Psoas muscle (tissue), 8 donors: ENCODE measurements at regions of chr2 and their contacts with region 1.

Region 1: GRCh38 chr2:139409212-139409611 is 629.0 kb upstream of the NXPH2 start:
- DNase-seq: no peak
- ATAC-seq: no peak
- H3K4me3 ChIP-seq: no peak overlapping the region
- H3K27ac ChIP-seq: no peak overlapping the region
- H3K4me1 ChIP-seq: no peaks in the 10 kb centered on the region
- H3K27me3 ChIP-seq: no peaks in the 10 kb centered on the region
- CTCF ChIP-seq: no peak

Region 2: DNA sequence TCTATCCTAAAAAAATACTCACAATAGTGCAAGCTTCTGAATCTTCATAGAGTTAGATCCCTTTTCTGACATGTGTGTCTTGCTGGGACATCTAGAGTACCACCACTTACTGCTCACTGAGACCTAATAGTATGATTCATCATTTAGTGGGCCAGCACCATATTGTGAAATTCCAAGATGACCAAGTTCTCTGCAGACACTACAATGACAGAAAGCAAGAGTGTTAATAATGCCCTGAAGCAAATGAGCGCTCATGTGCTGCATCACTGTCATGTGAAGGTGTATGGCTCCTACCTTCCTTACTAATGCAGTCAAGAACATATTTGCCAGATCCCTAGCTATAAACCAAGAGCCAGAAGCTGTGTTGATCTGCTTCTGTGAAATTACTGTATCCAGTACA is 22.8 kb before region 1 on chr2:
- intact Hi-C with region 1: loop called in 1 of 2 experiments (anchors 1 kb)
- DNase-seq: no peak
- ATAC-seq: no peak
- H3K4me3 ChIP-seq: no peak overlapping the region
- H3K27ac ChIP-seq: no peak overlapping the region
- H3K4me1 ChIP-seq: no peaks in the 10 kb centered on the region
- H3K27me3 ChIP-seq: no peaks in the 10 kb centered on the region
- CTCF ChIP-seq: no peak

Region 3: GRCh38 chr2:139478206-139478914 is 69.1 kb after region 1 on chr2:
- intact Hi-C with region 1: no loop called
- DNase-seq: no peak
- ATAC-seq: no peak
- H3K4me3 ChIP-seq: no peak overlapping the region
- H3K27ac ChIP-seq: no peak overlapping the region
- H3K4me1 ChIP-seq: no peaks in the 10 kb centered on the region
- H3K27me3 ChIP-seq: no peaks in the 10 kb centered on the region
- CTCF ChIP-seq: no peak